ENCODE measurements at regions of chr5 and their contacts with region 1.

Region 1: GRCh38 chr5:132490486-132491367 is at the start of gene IRF1:
- DNase-seq: peak; percentile 95
- total RNA-seq, gene IRF1: 12.2 and 19.7 TPM in 2 replicates

Region 2: DNA sequence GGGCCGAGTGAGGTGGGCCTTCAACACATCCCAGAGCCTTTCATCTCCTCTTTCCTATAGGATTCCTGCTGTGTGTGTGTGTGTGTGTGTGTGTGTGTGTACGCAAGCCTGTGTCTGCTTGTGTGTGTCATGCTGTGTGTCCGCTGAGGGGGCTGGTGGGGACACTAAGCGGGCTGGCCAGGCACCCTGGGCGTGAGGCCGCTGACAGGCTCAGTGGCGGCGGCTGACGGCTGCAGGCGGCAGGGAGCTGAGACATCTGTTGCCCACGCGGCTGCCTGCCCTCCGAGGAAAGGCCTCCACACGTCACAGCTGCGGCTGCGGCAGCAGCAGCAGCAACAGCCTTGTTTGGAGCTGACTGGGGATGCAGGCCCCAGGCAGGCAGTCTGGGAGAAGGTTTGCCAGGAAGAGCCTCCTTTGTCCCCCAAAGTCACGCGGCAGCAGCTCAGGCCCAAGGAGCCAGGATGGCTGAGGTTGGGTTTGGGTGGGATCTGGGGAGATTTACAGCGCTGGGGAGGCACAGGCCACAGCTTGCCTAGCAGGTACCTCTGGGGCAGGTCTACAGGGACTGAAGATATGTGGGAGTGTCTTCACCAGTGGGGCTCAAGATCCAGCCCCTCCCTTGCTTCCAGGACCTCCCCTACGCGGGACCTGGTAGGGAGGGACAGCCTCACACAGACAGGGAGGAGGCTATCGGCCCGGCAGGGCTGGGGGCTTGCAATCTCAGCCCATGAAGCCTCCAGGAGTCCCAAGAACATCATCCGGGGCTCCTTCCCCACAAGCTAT is 231.5 kb before region 1 on chr5:
- in situ Hi-C with region 1: no loop called
- DNase-seq: no peak

Region 3: DNA sequence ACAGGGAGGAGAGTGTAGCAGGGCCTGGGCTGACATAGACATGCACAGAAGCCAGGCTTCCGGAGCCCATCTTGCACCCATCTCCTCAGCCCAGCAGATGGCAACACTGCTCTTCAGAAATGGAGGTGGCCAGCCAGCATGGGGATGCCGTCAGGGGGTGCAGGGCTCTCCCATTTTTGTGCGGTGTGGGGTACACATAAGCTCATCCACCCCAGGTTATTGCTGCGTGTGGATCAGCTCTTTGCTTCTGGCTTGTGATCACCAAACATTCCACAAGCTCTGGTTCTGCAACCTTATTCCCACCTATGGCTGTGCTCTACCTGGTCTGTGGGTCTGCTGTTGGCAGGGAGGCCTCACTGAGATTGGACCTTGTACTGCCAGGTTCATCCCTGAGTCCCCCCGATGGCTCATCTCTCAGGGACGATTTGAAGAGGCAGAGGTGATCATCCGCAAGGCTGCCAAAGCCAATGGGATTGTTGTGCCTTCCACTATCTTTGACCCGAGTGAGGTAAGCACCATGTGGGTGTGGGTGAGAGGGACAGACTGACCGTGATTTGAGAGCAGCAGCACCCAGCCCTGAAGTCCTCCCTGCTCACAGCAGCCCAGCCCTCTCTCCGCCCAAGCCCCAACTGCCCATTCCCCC is 104.0 kb before region 1 on chr5:
- in situ Hi-C with region 1: loop called (anchors 25 kb)
- DNase-seq: peak; percentile 71

Measured in Caki2 (cell line).